ENCODE measurements at regions of chr5 and their contacts with region 1.

Region 1: DNA sequence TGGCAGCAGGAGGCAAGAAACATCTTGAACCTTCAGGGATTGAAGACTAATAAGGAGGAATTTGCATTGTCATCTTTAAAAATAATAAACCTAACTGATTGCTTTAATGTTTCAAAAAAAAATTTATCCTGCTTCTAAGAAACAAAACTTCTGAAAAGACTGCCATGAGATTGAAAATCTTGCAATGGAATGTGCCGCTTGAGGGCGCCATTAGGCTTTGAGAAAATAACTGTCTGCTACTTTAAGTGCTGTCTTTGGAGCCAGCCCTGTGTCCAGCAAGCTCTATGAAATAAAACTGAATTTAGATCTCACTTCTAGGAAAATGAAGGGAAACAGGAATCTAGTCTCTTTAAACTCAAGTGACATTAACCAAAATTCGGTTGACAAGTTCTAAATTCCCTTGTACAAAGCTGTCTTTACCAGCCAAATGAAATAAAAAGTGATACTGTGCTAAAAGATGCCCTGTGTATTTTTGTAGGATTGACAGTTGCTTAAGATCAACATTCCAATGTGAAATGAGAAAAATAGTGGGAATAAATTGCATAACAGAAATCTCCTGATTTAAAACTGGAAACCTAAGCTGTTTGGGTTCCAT is 79.4 kb downstream of the ESM1 start:
- DNase-seq: peak; percentile 84
- ATAC-seq: no peak
- H3K4me3 Mint-ChIP-seq: no peak overlapping the region
- H3K27ac Mint-ChIP-seq: no peak overlapping the region
- H3K4me1 Mint-ChIP-seq: peaks cover 11% of the 10 kb centered on the region
- H3K27me3 Mint-ChIP-seq: peaks cover 40% of the 10 kb centered on the region

Region 2: GRCh38 chr5:54547711-54548250 is 358.3 kb before region 1 on chr5:
- CTCF ChIA-PET with region 1: no interaction called
- POLR2A ChIA-PET with region 1: no interaction called
- intact Hi-C with region 1: no loop called
- DNase-seq: no peak
- ATAC-seq: no peak
- H3K4me3 Mint-ChIP-seq: no peak overlapping the region
- H3K27ac Mint-ChIP-seq: no peak overlapping the region
- H3K4me1 Mint-ChIP-seq: no peaks in the 10 kb centered on the region
- H3K27me3 Mint-ChIP-seq: no peaks in the 10 kb centered on the region

Region 3: GRCh38 chr5:54852007-54852406 is 54.0 kb before region 1 on chr5:
- CTCF ChIA-PET with region 1: no interaction called
- POLR2A ChIA-PET with region 1: no interaction called
- intact Hi-C with region 1: no loop called
- DNase-seq: no peak
- ATAC-seq: no peak
- H3K4me3 Mint-ChIP-seq: no peak overlapping the region
- H3K27ac Mint-ChIP-seq: no peak overlapping the region
- H3K4me1 Mint-ChIP-seq: no peaks in the 10 kb centered on the region
- H3K27me3 Mint-ChIP-seq: peaks cover 16% of the 10 kb centered on the region

Region 4: DNA sequence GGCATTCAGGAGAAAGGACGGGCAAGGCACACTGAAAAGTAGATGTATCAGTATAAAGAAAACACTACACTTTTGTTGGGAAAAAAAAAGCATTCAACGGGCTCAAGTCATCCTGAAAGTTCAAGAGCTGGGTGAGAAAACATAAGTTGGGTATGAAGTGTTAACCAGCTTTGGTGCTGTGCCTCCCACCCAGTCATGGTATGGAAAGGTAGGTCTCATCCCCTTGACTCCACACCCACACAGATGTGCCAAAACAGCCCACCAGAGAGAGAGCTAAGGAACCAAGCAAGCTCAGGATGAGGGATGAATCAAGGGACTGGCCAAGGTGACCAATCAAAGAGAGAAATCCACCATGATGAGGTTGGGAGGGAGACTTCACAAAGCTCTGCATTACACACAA is 24.7 kb after region 1 on chr5:
- CTCF ChIA-PET with region 1: interaction called, 13 read pairs
- POLR2A ChIA-PET with region 1: no interaction called
- intact Hi-C with region 1: no loop called
- DNase-seq: peak; percentile 27
- ATAC-seq: peak; percentile 19
- H3K4me3 Mint-ChIP-seq: no peak overlapping the region
- H3K27ac Mint-ChIP-seq: no peak overlapping the region
- H3K4me1 Mint-ChIP-seq: peaks cover 3% of the 10 kb centered on the region
- H3K27me3 Mint-ChIP-seq: peaks cover 17% of the 10 kb centered on the region

Region 5: GRCh38 chr5:55021410-55021809 is 115.4 kb after region 1 on chr5:
- CTCF ChIA-PET with region 1: no interaction called
- POLR2A ChIA-PET with region 1: no interaction called
- intact Hi-C with region 1: loop called in 1 of 2 experiments (anchors 10 kb)
- DNase-seq: no peak
- ATAC-seq: no peak
- H3K4me3 Mint-ChIP-seq: no peak overlapping the region
- H3K27ac Mint-ChIP-seq: no peak overlapping the region
- H3K4me1 Mint-ChIP-seq: peaks cover 36% of the 10 kb centered on the region
- H3K27me3 Mint-ChIP-seq: no peaks in the 10 kb centered on the region

Region 6: GRCh38 chr5:55102348-55102747 is 196.3 kb after region 1 on chr5 and contains the start of gene GZMA:
- CTCF ChIA-PET with region 1: no interaction called
- POLR2A ChIA-PET with region 1: no interaction called
- intact Hi-C with region 1: loop called in 1 of 2 experiments (anchors 1 kb)
- DNase-seq: peak; percentile 39
- ATAC-seq: peak; percentile 84
- H3K4me3 Mint-ChIP-seq: peak within 1 kb of the TSS; percentile 50
- H3K27ac Mint-ChIP-seq: peak within 1 kb of the TSS; percentile 74
- H3K4me1 Mint-ChIP-seq: peaks cover 65% of the 10 kb centered on the region
- H3K27me3 Mint-ChIP-seq: peaks cover 19% of the 10 kb centered on the region
- total RNA-seq, gene GZMA: 2.4 TPM

Region 7: DNA sequence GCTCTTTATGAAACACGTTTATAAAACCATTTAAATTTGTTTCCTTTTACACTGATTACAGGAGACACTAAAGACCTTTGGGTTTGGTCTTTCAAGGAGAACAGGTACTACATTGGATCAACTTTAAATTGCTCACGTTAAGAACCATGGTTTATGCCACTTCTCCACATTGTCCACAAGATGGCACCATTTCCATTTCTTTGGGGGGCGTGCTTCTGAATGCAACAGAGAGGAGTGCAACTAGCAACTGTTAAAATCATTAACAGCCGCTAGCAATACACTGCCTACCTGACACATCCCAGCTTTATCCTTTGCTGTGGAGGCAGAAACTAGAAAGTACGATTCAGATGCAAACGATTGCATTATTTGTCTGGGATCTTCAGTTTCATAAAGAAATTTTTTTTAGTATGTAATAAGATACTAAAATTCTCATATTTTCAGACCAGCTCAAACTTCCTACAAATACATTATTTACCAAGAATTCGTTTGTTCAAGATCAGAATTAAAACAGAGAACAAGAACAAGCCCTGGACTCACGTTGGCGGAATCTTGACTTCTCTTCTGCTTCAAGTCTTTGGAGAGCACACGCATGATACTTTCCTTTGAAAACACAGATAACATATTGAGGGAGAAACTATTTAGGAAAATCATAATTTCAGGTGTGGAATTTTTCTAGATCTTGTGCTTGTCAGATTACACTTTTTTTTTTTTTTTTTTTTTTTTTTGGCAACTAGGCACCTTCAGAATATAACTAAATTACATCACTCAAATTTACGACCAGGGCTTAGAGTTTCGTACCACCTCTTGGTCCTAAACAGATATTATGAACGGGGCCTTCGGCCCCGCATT is 266.2 kb after region 1 on chr5:
- CTCF ChIA-PET with region 1: interaction called, 10 read pairs
- POLR2A ChIA-PET with region 1: no interaction called
- intact Hi-C with region 1: no loop called
- DNase-seq: peak; percentile 73
- ATAC-seq: peak; percentile 71
- H3K4me3 Mint-ChIP-seq: peak overlapping the region; percentile 75
- H3K27ac Mint-ChIP-seq: no peak overlapping the region
- H3K4me1 Mint-ChIP-seq: peaks cover 37% of the 10 kb centered on the region
- H3K27me3 Mint-ChIP-seq: peaks cover 58% of the 10 kb centered on the region